ENCODE measurements at regions of chr14 and their contacts with region 1.

Region 1: DNA sequence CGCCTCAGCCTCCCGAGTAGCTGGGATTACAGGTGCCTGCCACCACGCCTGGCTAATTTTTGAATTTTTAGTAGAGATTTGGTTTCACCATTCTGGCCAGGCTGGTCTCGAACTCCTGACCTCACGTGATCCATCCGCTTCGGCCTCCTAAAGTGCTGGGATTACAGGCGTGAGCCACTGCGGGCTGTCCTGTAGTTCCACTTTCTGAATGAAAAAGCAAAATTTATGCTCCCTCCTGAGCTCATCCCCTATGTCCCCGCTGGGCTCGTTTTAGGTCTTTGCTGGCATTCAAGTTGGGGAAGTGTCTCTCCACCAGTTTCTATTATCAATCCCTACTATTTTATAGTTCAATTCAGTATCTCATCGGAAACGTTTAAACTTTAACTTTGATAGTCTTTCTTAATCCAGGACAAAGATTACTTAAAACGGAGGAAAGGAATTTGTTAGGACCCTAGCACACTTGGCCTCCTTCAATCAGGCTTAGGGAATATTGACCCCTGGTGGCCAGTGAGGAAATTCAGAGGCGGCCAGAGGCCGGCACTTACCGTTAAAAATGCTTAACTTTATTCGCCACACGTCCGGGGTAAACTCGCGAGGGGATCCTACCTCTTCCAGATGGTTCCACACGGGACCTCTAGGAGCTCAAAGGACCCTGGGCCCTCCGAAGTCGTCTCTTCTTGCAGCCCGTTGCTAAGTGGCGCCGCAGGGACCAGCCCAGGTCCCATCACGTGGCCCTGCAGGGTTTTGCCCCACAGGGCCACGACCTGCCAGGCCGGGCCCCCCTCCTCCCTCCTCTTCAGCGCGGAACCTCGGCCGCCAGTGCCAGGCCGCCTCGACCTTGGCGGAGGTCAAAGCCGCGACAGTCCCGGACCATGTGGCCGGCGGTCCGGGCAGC is 11.4 kb upstream of the DNAL1 start:
- DNase-seq: peak; percentile 9
- H3K4me3 ChIP-seq: peak overlapping the region; percentile 28
- H3K27me3 ChIP-seq: no peaks in the 10 kb centered on the region
- CTCF ChIP-seq: peak; percentile 86

Region 2: GRCh38 chr14:73644531-73645247 is 11.3 kb after region 1 on chr14 and contains the start of gene DNAL1:
- CTCF ChIA-PET with region 1: interaction called, 11 read pairs
- POLR2A ChIA-PET with region 1: no interaction called
- DNase-seq: peak; percentile 44
- H3K4me3 ChIP-seq: peak within 1 kb of the TSS; percentile 88
- H3K27me3 ChIP-seq: no peaks in the 10 kb centered on the region
- CTCF ChIP-seq: no peak
- polyA plus RNA-seq, gene DNAL1: 2.4 and 6.6 TPM in 2 replicates

Measured in BJ (cell line).